Endothelial cell of umbilical vein (primary cell): ENCODE measurements at regions of chr5 and their contacts with region 1.

Region 1: DNA sequence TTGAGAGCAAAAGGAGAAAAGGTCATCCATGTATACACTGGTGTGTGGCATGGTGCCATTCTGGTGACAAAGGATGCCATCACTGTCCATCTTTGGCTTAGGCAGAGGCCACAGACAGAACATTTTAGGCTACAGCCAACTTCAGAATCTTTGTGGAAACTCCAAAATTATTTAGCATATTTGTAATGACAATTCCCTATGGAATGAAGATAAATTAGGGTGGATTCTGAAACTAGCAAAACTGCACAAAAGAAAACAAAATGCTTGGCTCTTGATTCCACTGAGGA is 92.5 kb downstream of the FBXW11 start:
- DNase-seq: no peak
- H3K4me3 ChIP-seq: no peak overlapping the region
- H3K27ac ChIP-seq: no peak overlapping the region
- H3K4me1 ChIP-seq: peaks cover 10% of the 10 kb centered on the region
- H3K27me3 ChIP-seq: no peaks in the 10 kb centered on the region
- CTCF ChIP-seq: no peak
- POLR2A ChIP-seq: no peak

Region 2: DNA sequence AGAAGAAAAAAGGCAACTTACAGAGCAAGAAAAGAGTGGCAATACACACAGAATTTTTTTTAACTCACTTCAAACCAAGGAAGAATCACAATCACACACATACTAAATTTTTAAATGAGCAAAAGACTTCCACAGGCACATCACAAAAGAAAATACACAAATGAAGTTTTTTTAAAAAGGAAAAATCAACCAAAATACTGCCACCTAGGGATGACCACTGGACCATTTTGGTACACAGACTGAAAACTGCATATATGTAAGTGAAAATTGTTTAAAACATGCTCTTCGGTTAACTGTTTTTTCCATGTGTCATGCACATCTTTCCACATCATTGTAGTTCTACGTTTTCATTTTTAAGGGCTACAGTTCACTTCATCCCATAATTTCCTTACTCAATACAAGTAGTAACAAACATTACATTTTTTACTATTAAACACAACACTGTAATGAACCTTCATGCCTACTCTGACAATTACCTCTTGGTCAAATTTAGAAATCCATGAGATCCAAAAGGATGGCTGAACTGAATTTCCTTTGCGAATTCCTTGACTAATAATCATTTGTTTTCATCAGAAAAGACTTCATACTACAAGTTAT is 13.5 kb after region 1 on chr5:
- CTCF ChIA-PET with region 1: interaction called, 25 read pairs
- POLR2A ChIA-PET with region 1: no interaction called
- dilution Hi-C with region 1: no loop called
- intact Hi-C with region 1: no loop called
- DNase-seq: no peak
- H3K4me3 ChIP-seq: no peak overlapping the region
- H3K27ac ChIP-seq: no peak overlapping the region
- H3K4me1 ChIP-seq: no peaks in the 10 kb centered on the region
- H3K27me3 ChIP-seq: no peaks in the 10 kb centered on the region
- CTCF ChIP-seq: peak; percentile 34 to 38
- POLR2A ChIP-seq: no peak

Region 3: DNA sequence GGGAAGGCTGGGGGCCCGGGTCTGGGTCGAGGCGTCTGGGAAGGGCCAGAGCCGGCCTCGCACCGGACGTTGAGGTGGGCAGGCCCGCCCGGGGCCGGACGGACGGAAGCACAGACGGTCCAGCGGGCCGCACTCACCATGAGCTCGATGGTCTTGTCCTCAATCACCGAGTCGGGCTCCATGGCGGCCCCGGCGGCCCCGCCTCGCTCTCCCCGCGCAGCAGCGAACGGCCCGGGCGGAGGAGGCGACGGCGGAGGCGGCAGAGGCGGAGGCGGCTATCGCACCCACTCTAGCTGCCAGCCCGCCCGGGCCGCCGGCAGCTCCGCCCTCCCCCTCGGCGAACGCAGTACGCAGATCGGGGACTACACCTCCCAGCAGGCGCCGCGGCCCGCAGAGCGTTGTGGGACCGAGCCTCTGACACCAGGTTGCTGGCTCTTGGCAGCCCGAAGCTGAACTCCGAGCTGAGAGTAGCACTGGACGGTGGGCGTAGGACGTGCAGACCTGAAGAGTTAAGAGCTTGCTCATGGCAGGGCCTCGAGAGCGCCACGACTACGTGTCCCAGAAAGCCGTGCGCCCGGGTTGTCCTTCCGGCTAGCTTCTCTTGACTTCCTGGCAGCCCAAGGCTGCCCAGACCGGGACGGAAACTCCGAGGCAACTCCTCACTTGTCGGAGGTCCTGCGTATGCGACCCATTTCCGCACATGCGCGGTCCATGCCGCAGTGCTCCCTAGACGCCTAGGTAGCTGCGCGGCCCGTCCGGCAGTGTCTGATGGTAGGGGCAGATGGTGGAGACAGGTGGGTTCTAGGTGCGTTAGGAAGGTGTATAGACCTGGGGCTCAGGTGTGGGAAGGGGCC is 92.6 kb after region 1 on chr5 and contains the start of gene FBXW11:
- CTCF ChIA-PET with region 1: interaction called, 112 read pairs
- POLR2A ChIA-PET with region 1: interaction called, 3 read pairs
- dilution Hi-C with region 1: no loop called
- intact Hi-C with region 1: loop called (anchors 1 kb)
- DNase-seq: peak; percentile 95
- H3K4me3 ChIP-seq: peak within 1 kb of the TSS; percentile 66 to 98 (median 88)
- H3K27ac ChIP-seq: peak within 1 kb of the TSS; percentile 78
- H3K4me1 ChIP-seq: peaks cover 44% of the 10 kb centered on the region
- H3K27me3 ChIP-seq: no peaks in the 10 kb centered on the region
- CTCF ChIP-seq: no peak
- POLR2A ChIP-seq: peak; percentile 96
- total RNA-seq, gene FBXW11: 42.3 and 44.7 TPM in 2 replicates

Region 4: DNA sequence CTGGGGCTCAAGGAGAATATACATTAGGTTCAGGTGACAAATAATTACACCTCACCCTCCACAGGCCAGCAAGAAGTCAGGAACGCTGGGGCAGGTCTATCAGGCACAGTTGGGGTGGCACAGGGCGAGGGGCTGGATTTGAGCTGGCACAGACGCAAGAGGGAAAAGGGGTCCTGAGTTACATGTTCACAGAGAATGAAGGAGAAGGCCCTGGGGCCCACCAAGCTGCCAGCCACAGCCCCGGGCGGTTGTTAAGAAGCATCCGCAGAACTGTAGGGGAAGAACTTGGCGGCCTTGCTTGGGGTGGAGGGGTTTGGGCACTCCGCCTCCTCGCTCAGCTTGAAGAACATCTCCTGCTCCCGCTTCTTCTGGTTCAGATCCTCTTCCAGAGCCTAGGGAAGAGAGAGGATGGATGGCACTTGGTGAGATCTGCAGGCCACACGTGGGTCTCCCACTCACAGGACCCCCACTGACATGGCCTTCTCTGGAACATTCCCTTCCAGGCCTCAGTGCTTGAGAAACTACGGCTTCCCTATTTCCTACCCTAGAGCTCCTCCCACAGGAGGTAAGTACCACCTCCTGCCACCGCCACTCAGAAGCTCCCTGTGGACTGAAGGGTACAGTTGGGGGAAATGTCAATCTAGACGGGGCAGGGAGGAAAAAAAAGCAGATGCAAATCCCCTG is 130.8 kb after region 1 on chr5:
- CTCF ChIA-PET with region 1: interaction called, 122 read pairs
- POLR2A ChIA-PET with region 1: no interaction called
- dilution Hi-C with region 1: no loop called
- intact Hi-C with region 1: loop called (anchors 1 kb)
- DNase-seq: no peak
- H3K4me3 ChIP-seq: no peak overlapping the region
- H3K27ac ChIP-seq: no peak overlapping the region
- H3K4me1 ChIP-seq: peaks cover 19% of the 10 kb centered on the region
- H3K27me3 ChIP-seq: no peaks in the 10 kb centered on the region
- CTCF ChIP-seq: no peak
- POLR2A ChIP-seq: no peak

Region 5: GRCh38 chr5:172065501-172065990 is 151.6 kb after region 1 on chr5:
- CTCF ChIA-PET with region 1: interaction called, 292 read pairs
- POLR2A ChIA-PET with region 1: no interaction called
- dilution Hi-C with region 1: no loop called
- intact Hi-C with region 1: no loop called
- DNase-seq: no peak
- H3K4me3 ChIP-seq: no peak overlapping the region
- H3K27ac ChIP-seq: no peak overlapping the region
- H3K4me1 ChIP-seq: no peaks in the 10 kb centered on the region
- H3K27me3 ChIP-seq: no peaks in the 10 kb centered on the region
- CTCF ChIP-seq: no peak
- POLR2A ChIP-seq: no peak

Region 6: GRCh38 chr5:172283020-172283861 is 369.3 kb after region 1 on chr5 and contains the start of gene UBTD2:
- CTCF ChIA-PET with region 1: interaction called, 22 read pairs
- POLR2A ChIA-PET with region 1: no interaction called
- dilution Hi-C with region 1: no loop called
- intact Hi-C with region 1: loop called (anchors 1 kb)
- DNase-seq: peak; percentile 79
- H3K4me3 ChIP-seq: peak within 1 kb of the TSS; percentile 73 to 93 (median 92)
- H3K27ac ChIP-seq: peak within 1 kb of the TSS; percentile 82
- H3K4me1 ChIP-seq: peaks cover 21% of the 10 kb centered on the region
- H3K27me3 ChIP-seq: no peaks in the 10 kb centered on the region
- CTCF ChIP-seq: peak; percentile 35 to 65
- POLR2A ChIP-seq: peak; percentile 84
- total RNA-seq, gene UBTD2: 21.6 and 22.6 TPM in 2 replicates